ENCODE measurements at regions of chr20 and their contacts with region 1.

Region 1: DNA sequence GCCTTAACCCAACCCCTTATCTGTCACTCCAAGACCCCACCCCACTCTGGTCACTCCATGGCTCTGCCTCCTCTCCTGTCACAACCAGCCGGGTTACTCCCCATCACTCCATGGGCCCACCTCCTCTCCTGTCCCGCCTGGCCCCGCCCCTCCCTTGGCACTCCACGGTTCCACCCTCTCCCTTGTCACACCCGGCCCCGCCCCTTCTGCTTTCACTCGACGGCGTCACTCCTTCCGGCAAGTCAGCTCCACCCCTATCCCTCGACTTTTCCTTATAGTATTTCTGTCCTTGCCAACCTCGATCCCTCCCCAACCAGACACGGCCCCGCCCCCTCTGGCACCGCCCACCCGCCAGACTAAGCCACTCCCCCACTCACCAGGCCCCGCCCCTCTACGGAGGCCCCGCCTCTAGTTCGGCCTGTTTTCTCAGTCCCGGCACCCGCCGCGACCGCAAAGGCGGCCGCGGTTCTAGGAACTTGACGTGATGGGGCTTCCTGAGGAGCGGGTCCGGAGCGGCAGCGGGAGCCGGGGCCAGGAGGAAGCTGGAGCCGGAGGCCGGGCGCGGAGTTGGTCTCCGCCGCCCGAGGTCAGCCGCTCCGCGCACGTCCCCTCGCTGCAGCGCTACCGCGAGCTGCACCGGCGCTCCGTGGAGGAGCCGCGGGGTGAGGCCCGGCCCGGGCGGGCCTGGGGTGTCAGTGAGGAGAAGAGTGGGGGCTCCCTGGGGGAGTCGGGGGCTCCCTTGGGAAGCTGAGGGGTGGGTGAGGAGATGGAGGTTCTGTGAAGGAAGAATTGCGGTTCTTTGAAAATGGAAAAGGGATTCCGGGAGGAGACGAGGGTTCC is at the start of gene ACSS2:
- DNase-seq: peak; percentile 99
- ATAC-seq: peak; percentile 84 to 90 (median 87)
- H3K4me3 ChIP-seq: peak within 1 kb of the TSS; percentile 97
- H3K27ac ChIP-seq: peak within 1 kb of the TSS; percentile 96
- H3K4me1 ChIP-seq: peaks cover 39% of the 10 kb centered on the region
- H3K27me3 ChIP-seq: no peaks in the 10 kb centered on the region
- CTCF ChIP-seq: no peak
- total RNA-seq, gene ACSS2: 106 to 161 (median 115) TPM

Region 2: DNA sequence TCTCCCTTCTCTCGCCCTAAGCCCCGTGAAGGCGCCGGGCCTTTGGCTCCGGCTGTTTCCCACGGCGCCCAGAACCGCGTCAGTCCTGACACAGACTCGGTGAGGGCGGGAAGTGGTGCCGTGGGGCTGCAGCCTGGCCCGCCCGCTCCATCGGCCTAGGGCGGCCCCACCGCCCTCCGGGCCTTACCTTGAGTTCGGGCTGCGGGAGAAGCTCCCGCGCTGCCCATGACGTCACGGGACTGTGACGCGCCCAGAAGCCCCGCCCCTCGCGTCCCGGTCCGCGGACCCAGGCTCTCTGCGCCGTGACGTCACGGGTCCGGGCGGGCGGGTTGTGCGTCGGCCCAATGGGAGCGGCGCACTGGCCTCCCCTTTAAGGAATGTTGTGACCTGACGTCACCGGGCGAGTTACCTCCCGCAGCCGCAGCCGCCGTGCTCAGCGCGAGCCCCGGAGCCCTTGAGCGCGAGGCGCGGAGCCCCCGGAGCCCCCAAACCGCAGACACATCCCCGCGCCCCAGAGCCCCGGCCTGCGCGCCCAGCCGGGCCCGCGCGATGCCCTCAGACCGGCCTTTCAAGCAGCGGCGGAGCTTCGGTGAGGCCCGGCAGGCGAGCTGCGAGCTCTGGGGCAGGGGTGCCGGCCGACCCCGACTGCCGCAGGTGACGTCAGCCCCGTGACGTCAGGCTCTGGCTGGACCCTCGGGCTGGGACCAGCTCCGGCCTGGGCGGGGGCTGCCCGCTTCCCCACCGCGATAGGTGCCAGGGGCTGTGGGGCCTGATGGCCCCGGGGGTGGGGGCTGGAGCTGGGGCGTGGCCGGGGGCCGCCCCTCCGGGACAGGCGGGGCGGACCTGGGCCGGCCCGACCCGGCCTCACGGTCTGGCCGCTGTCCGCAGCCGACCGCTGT is 317.8 kb before region 1 on chr20 and contains the start of gene MAP1LC3A:
- intact Hi-C with region 1: no loop called
- DNase-seq: peak; percentile 95 to 97
- ATAC-seq: peak; percentile 94 to 96 (median 94)
- H3K4me3 ChIP-seq: peak within 1 kb of the TSS; percentile 82
- H3K27ac ChIP-seq: peak within 1 kb of the TSS; percentile 86
- H3K4me1 ChIP-seq: peaks cover 7% of the 10 kb centered on the region
- H3K27me3 ChIP-seq: no peaks in the 10 kb centered on the region
- CTCF ChIP-seq: no peak
- total RNA-seq, gene MAP1LC3A: 27.4 to 44.9 (median 37.5) TPM

Region 3: DNA sequence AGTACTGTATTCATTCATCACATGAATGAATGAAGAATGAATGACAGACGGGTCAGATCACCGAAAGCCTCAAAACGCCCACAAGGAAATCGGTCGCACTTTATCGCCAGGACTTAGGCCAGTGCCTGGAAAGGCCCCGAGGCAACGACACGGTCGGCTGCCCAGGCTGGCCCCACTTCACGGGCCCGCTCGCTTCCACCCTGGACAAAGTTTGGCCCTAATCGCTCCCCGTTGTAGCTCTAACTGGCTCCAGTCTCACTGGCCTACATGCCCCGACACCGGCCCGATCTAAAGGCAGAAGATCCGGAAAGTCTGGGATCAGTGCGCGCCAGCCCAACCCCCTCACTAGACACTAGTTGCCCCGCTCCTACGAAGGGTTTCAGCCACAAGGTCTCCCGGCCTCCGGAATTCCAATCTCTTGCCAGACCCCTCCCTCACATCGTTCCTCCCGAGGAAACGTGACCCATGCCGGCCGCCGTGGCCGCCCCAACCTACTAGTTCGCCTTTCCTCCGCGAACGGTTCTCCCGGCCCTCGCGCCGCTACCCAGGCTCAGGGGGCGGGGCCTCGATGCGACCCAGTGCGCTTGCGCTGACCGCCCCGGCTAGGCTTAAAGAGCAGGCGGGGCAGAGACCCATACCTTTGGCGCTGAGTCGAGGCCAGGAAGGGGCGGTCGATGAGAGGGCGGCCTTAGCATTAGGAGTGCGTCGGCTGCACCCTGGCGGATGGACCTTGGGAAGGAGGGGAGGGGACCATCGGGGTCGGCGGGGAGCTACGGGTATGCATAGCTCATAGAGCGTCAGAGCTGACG is 79.1 kb after region 1 on chr20 and contains the starts of genes GSS and MYH7B:
- intact Hi-C with region 1: loop called (anchors 1 to 2 kb)
- DNase-seq: peak; percentile 99
- ATAC-seq: peak; percentile 87 to 93 (median 92)
- H3K4me3 ChIP-seq: peak within 1 kb of the TSS; percentile 80
- H3K27ac ChIP-seq: peak within 1 kb of the TSS; percentile 96
- H3K4me1 ChIP-seq: peaks cover 24% of the 10 kb centered on the region
- H3K27me3 ChIP-seq: no peaks in the 10 kb centered on the region
- CTCF ChIP-seq: peak; percentile 46
- total RNA-seq, gene GSS: 21.5 to 36.6 (median 26.6) TPM
- total RNA-seq, gene MYH7B: 10.6 to 101 (median 22.1) TPM

Region 4: DNA sequence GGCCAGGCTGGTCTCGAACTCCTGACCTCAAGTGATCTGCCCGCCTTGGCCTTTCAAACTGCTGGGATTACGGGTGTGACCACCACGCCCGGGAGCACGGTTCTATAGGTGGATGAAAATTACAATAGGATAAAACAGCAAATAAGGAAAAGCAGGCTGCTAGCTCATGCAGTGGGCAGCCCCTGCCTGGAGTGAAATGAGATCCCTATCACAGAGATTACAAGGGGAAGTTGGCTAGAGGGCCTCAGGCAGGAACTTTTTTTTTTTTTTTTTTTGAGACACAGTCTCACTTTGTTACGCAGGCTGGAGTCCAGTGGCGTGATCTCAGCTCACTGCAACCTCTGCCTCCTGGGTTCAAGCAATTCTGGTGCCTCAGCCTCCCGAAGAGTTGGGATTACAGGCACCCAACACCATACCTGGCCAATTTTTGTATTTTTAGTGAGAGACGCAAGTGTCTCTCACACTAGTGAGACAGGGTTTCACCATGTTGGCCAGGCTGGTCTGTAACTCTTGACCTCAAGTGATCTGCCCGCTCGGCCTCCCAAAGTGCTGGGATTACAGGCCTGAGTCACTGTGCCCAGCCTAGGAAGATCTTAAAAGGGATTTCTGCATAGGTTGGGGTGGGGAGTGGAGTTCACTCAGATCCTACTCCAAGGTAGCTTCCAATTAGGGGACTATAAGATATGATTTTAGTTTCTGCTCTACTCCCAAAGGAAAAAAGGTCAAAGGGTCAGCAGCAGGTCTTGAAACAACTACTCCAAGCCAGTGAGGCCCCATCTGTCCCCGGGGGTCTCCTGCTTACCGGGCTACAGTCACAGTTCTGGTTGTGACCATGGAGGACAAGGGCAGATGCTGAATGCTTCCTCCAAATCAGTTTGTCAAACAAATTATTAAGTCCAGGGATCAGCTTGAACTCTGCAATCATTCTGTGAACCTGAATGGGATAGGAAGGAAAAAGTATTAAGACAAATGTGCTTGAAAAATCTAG is 139.1 kb after region 1 on chr20:
- intact Hi-C with region 1: loop called in 1 of 2 experiments (anchors 5 kb)
- DNase-seq: peak; percentile 19 to 75
- ATAC-seq: peak; percentile 44 to 73 (median 62)
- H3K4me3 ChIP-seq: no peak overlapping the region
- H3K27ac ChIP-seq: peak overlapping the region; percentile 85
- H3K4me1 ChIP-seq: peaks cover 60% of the 10 kb centered on the region
- H3K27me3 ChIP-seq: no peaks in the 10 kb centered on the region
- CTCF ChIP-seq: no peak

Region 5: GRCh38 chr20:35092524-35093266 is 216.3 kb after region 1 on chr20 and contains the start of gene TRPC4AP:
- intact Hi-C with region 1: loop called (anchors 5 to 10 kb)
- DNase-seq: peak; percentile 90 to 95
- ATAC-seq: peak; percentile 95 to 98 (median 96)
- H3K4me3 ChIP-seq: peak within 1 kb of the TSS; percentile 82
- H3K27ac ChIP-seq: peak within 1 kb of the TSS; percentile 96
- H3K4me1 ChIP-seq: peaks cover 38% of the 10 kb centered on the region
- H3K27me3 ChIP-seq: no peaks in the 10 kb centered on the region
- CTCF ChIP-seq: peak; percentile 90
- total RNA-seq, gene TRPC4AP: 36.0 to 62.3 (median 58.1) TPM